ENCODE measurements at regions of chr11 and their contacts with region 1.

Region 1: DNA sequence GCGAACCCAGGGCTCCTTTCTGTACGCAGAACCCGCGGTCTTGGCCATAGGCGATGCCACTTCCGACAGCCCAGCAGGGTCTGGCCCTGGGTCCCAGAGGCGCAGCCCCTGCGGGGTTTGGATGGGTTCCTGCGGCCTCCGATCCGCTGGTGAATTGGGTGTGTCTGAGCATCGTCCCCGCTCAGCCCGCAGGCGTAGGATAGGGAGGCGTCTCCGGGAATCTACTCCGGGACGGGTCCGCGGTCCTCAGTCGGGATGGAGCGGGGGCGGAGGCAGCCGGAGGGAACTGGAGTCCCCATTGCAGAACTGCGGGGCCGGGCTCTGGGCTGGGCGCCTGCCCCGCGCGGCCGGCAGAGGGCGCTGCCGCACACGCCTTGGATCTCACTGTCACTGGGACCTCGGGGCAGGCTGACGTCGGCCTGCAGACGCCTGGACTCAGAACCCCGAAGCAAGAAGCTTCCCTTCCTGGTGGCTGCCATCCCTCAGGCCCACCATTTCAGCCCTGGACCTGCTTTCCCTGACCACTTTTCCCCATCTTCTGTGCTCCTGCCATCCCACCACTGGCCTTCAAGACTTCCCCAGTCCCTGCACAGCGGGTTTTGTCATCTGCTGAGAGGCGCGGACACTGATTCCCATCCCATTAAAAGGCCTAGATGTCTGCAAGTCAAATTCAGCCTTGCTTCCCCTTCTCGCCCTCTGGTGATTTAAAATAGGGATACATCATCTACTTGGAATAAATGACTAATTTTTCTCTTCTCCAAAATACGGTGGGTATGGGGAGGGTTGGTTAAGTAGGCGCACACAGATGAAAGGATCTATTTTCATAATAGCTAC is 38.3 kb upstream of the CREB3L1 start:
- H3K4me3 ChIP-seq: peak overlapping the region; percentile 39
- H3K27ac ChIP-seq: no peak overlapping the region
- H3K4me1 ChIP-seq: peaks cover 2% of the 10 kb centered on the region; the same call in 1 of the 2 replicates
- CTCF ChIP-seq: peak; percentile 92

Region 2: GRCh38 chr11:46222490-46223251 is 16.5 kb before region 1 on chr11:
- CTCF ChIA-PET with region 1: interaction called, 12 read pairs
- POLR2A ChIA-PET with region 1: interaction called, 4 read pairs
- H3K4me3 ChIP-seq: no peak overlapping the region
- H3K27ac ChIP-seq: no peak overlapping the region
- H3K4me1 ChIP-seq: no peaks in the 10 kb centered on the region
- CTCF ChIP-seq: no peak

Region 3: DNA sequence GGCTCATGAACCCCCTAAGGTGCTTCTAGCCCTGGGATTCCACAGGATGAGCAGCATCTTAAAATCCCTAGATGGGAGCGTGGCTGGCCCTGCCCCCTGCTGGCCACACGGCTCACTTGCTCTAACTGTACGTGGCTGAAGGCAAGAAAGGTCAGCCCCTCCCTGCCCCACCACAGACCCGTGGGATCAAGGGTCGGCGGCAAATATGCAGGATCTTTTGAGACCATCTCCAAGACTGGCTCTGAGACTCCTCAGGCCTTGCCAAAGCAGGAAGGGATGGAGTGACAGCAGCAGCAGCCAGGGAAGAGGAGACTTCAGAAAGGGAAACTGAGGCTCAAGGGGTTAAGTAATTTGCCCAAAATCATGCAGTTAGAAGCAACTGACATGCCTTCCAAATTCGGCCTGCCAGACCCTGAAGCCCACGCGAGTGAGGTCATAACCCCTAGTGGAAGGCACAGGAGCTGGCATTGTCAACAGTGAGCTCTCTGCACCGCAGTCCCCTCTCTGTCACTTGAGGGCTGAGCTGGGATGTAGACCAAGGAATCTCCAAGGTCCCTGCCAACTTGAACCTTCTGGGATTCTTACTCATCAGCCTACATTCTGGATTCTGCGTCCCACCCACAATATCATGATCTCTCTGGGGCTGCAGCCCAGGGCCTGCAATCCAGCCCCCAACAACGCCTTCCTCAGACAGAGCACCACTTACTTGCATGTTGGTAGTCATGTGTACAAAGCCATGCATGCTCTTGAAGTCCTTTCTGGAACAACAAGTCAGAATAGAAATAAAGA is 69.6 kb after region 1 on chr11:
- CTCF ChIA-PET with region 1: interaction called, 451 read pairs
- POLR2A ChIA-PET with region 1: interaction called, 10 read pairs
- H3K4me3 ChIP-seq: no peak overlapping the region
- H3K27ac ChIP-seq: no peak overlapping the region
- H3K4me1 ChIP-seq: no peaks in the 10 kb centered on the region
- CTCF ChIP-seq: peak; percentile 79

Region 4: DNA sequence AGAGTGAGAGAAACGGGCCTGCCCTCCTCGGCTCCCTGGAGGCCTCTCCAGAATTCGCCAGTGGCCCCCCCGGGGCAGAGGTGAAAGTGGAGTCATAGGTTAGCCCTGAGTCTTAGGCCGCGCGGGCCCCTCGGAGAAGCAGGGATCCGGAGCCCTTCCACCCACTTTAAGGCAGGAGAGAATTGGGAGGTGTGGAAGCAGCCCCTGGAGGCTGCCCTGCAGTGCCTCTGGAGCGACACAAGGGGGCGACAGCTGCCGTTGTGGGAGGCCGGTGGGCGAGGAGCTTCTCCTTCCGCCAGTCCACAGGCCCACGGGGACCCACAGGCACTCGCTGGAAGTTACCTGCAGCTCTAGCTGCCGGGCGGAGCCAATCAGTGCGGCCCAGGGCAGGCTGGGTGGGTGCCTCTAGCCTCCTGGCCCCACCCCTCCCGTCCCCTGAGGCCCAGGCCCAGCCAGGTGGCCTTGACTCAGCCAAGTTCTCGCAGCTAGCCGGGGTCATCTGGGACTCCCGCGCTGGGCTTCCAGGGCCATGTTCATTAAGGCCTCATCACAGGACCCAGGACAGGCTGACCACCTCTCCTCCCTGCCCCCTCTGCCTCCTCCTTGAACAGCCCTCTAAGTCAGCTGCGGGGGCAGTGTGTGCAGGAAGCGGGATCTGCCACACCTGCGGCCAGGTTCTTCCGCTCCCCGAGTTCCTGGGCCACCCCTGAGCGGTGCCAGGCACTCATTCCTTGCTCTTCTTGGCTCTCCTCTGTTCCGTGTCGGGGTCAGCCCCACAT is 113.1 kb after region 1 on chr11:
- CTCF ChIA-PET with region 1: interaction called, 26 read pairs
- POLR2A ChIA-PET with region 1: interaction called, 3 read pairs
- H3K4me3 ChIP-seq: no peak overlapping the region
- H3K27ac ChIP-seq: no peak overlapping the region
- H3K4me1 ChIP-seq: no peaks in the 10 kb centered on the region; the same call in 1 of the 2 replicates
- CTCF ChIP-seq: peak; percentile 70

Region 5: GRCh38 chr11:46392421-46393230 is 153.4 kb after region 1 on chr11:
- CTCF ChIA-PET with region 1: interaction called, 10 read pairs
- POLR2A ChIA-PET with region 1: interaction called, 3 read pairs
- H3K4me3 ChIP-seq: peak overlapping the region; percentile 45
- H3K27ac ChIP-seq: no peak overlapping the region
- H3K4me1 ChIP-seq: no peaks in the 10 kb centered on the region
- CTCF ChIP-seq: no peak